MCF 10A (cell line): ENCODE measurements at regions of chr3 and their contacts with region 1.

Region 1: GRCh38 chr3:50337191-50337841 is 3.3 kb downstream of the RASSF1 start:
- DNase-seq: peak; percentile 99
- H3K4me3 Mint-ChIP-seq: peak overlapping the region; percentile 85
- H3K27ac Mint-ChIP-seq: peak overlapping the region; percentile 91
- H3K4me1 Mint-ChIP-seq: peaks cover 22% of the 10 kb centered on the region
- H3K27me3 Mint-ChIP-seq: no peaks in the 10 kb centered on the region
- CTCF ChIP-seq: no peak

Region 2: DNA sequence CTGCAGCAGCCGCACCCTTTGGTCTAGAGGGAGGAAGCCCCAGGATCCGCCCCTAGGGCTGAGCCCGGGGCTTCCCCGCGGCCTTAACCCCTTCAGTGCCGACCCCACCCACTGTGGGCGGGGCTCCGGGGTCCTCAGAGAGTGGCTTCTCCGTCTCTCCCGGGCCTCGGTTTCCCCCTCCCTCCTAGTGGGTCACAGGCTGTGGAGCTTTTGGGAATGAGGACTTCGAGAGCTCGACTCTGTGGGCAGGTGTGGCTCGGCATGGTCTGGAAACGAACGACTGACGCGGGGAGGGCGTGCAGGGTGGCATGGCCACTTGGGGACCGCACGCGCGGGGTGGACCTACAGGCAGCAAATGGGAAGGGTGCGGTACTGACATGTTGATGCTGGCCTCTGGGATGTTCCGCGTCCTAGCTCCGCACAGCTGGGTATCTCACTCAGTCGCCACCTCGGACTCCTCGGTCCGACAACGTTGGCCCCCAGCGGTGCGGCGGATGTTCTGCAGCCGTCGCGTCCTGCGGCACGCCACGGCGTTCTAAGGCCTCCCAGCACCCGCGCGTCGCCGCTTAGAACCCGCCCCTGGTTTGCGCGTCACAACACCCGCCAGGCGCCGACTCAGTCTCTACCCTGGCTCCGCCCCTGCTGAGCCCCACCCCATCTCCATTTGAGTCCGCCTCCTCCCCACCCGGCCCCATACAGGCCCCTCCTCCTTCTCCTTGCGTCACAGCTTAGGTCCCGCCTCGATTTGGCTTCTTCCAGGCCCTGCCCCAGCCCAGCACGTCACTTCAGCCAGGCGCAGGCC is 38.3 kb before region 1 on chr3 and contains the starts of genes HYAL3 and NAA80:
- CTCF ChIA-PET with region 1: interaction called, 5 read pairs
- POLR2A ChIA-PET with region 1: interaction called, 29 read pairs
- intact Hi-C with region 1: no loop called
- DNase-seq: peak; percentile 99
- H3K4me3 Mint-ChIP-seq: peak within 1 kb of the TSS; percentile 92
- H3K27ac Mint-ChIP-seq: peak within 1 kb of the TSS; percentile 97
- H3K4me1 Mint-ChIP-seq: peaks cover 7% of the 10 kb centered on the region
- H3K27me3 Mint-ChIP-seq: no peaks in the 10 kb centered on the region
- CTCF ChIP-seq: peak; percentile 23
- total RNA-seq, gene HYAL3: 2.3 and 4.7 TPM in 2 replicates
- total RNA-seq, gene NAA80: 11.4 and 12.4 TPM in 2 replicates

Region 3: DNA sequence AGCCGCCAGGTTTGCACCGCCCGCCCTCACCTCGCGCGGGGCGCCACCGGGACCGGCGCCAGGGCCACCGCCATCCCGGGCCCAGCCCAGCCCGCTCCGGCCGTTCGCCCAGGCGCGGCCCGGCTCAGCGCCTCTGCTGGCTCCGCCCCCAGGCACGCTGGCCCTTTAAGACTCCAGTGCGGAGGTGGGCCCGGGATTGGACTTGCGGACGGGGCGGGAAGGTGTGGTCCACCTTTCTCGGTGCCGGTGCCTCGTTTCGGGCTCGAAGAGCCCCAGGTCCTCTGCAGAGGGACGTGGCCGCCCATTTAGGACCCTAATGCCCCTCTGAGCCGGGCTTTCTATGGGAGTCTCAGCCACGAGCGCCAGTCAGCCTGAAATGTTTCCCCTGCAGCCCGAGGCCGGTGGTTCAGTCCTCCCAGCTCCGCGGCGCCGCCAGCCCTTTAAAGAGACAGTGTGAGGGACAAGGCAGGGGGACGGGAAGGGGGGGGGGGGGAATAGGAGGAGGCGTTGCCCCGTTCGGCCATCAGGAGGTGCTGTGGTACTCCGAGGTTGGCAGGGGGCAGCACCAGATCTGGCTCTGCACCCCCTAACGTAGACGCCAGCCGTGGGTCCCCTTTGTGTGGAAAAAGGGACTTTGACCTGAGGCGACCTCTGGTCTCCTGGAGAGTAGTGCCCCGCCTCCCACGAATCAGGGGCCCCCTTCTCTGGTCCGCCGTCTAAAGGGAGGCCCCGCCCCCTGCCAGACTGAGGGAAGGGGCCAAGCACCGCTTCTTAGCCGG is 15.8 kb before region 1 on chr3:
- CTCF ChIA-PET with region 1: interaction called, 5 read pairs
- POLR2A ChIA-PET with region 1: interaction called, 10 read pairs
- intact Hi-C with region 1: no loop called
- DNase-seq: peak; percentile 89
- H3K4me3 Mint-ChIP-seq: peak overlapping the region; percentile 80
- H3K27ac Mint-ChIP-seq: peak overlapping the region; percentile 98
- H3K4me1 Mint-ChIP-seq: peaks cover 17% of the 10 kb centered on the region
- H3K27me3 Mint-ChIP-seq: no peaks in the 10 kb centered on the region
- CTCF ChIP-seq: peak; percentile 38

Region 4: GRCh38 chr3:50350527-50351322 is 13.4 kb after region 1 on chr3 and contains the starts of genes CYB561D2 and NPRL2:
- CTCF ChIA-PET with region 1: interaction called, 40 read pairs
- POLR2A ChIA-PET with region 1: interaction called, 79 read pairs
- intact Hi-C with region 1: no loop called
- DNase-seq: peak; percentile 95
- H3K4me3 Mint-ChIP-seq: peak within 1 kb of the TSS; percentile 87
- H3K27ac Mint-ChIP-seq: peak within 1 kb of the TSS; percentile 95
- H3K4me1 Mint-ChIP-seq: peaks cover 26% of the 10 kb centered on the region
- H3K27me3 Mint-ChIP-seq: no peaks in the 10 kb centered on the region
- CTCF ChIP-seq: no peak
- total RNA-seq, gene CYB561D2: 24.0 and 24.1 TPM in 2 replicates
- total RNA-seq, gene NPRL2: 21.1 and 22.1 TPM in 2 replicates

Region 5: DNA sequence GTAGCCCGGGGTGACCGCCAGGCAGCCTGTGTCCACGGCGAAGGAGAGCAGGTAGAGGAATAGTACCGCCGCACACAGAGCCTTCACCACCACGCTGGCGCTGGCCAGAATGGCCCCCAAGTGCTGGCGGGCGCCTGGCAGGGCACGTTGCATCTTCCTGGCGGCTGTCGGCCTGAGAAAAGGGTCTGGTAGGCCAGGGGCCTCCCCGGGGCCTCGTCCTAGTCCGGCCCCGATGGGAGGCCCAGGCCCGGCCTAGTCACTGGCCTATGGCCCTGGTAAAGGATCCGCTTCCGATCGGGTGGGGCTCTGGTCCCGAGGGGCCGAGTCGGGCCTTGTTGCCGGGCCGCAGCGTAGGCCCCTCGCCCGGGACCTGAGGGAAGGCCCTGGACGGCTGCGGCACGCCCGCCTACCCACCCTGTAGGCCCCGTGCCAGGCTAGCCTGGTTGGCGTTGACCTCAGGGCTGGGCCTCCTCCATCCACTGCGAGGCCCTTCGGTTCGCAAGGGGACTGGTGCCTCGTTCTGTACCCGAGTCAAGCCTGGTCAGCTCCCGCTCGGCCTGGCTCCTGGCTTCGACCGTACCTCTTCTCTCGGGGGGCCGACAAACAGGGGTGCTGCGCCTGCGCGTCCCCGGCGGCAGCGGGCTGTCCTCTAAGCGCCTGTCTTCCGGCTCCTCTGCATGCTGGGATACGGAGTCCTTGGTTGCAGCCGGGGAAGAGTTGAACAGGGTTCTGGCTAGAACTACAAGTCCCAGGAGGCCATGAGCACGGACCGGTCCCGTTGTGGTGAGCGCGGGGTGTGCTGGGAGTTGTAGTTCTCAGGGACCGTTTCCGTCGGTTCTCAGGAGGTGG is 21.8 kb after region 1 on chr3 and contains the start of gene TMEM115:
- CTCF ChIA-PET with region 1: no interaction called
- POLR2A ChIA-PET with region 1: interaction called, 14 read pairs
- intact Hi-C with region 1: no loop called
- DNase-seq: peak; percentile 98
- H3K4me3 Mint-ChIP-seq: peak within 1 kb of the TSS; percentile 85
- H3K27ac Mint-ChIP-seq: peak within 1 kb of the TSS; percentile 96
- H3K4me1 Mint-ChIP-seq: peaks cover 13% of the 10 kb centered on the region
- H3K27me3 Mint-ChIP-seq: no peaks in the 10 kb centered on the region
- CTCF ChIP-seq: no peak
- total RNA-seq, gene TMEM115: 31.9 and 40.3 TPM in 2 replicates